GM12878 (cell line): ENCODE measurements at regions of chr19 and their contacts with region 1.

Region 1: GRCh38 chr19:15101479-15102082 is 5.6 kb upstream of the SYDE1 start:
- DNase-seq: no peak
- ATAC-seq: peak; percentile 66
- H3K4me3 ChIP-seq: no peak overlapping the region
- H3K27ac ChIP-seq: no peak overlapping the region
- H3K4me1 ChIP-seq: no peaks in the 10 kb centered on the region
- H3K27me3 ChIP-seq: no peaks in the 10 kb centered on the region
- CTCF ChIP-seq: peak; percentile 48 to 74 (median 62)
- EP300 ChIP-seq: no peak
- POLR2A ChIP-seq: no peak
- RAD21 ChIP-seq: peak; percentile 48

Region 2: GRCh38 chr19:15154002-15154612 is 52.5 kb after region 1 on chr19:
- CTCF ChIA-PET with region 1: interaction called, 52 read pairs
- POLR2A ChIA-PET with region 1: no interaction called
- RAD21 ChIA-PET with region 1: interaction called, 10 read pairs
- SMC1A ChIA-PET with region 1: interaction called, 4 read pairs
- in situ Hi-C with region 1: no loop called
- intact Hi-C with region 1: no loop called
- DNase-seq: no peak
- ATAC-seq: no peak
- H3K4me3 ChIP-seq: no peak overlapping the region
- H3K27ac ChIP-seq: no peak overlapping the region
- H3K4me1 ChIP-seq: no peaks in the 10 kb centered on the region
- H3K27me3 ChIP-seq: no peaks in the 10 kb centered on the region
- CTCF ChIP-seq: peak; percentile 43 to 48 (median 45); a peak in 5 of 6 replicates
- EP300 ChIP-seq: no peak
- POLR2A ChIP-seq: no peak
- RAD21 ChIP-seq: peak; percentile 30; the same call in 1 of the 2 replicates

Region 3: DNA sequence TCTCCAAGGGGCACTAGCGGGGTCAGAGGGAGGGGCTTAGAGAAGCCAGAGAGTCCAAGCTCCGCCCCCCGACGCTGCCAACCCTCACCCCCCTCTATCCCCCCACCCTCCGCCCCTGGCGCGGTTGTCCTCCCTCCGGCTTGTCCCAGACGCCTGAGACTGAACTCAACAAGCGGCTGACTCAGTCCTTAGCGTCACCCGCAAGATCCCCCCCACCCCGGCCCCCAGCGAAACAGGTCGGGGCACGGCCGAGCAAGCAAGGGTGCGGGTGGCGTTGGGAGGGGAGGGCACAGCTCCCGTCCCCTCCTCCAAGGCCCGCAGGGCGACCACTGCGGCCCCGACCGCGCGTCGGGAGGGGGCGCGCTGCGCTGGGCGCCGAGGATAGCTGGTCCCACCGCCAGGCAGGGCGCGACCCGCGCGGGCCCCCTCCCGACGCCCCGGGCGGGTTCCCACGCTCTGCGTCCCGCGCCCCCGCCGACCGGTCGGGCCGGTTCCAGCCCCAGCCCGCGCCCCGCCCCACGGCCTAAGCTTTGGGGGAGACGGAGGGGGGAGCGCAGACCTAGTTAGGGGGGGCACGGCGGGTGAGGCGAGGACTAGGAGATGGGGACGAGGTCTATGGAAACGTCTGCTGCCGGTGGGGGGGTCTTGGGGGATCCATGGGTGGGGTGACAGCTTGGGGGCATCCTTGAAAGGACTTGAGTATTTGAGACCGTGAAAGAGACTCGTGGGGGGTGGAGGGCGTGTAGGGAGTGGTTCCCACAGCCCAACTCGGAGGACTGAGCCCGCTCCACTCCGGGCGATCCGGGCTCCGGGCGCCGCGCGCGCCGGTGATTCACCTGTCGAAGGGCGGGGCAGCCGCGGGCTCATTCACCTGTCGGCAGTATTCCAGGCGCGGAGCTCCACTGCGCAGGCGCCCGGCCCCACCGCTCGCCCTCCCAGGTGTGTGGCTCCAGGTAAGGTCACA is 94.1 kb after region 1 on chr19:
- CTCF ChIA-PET with region 1: no interaction called
- POLR2A ChIA-PET with region 1: no interaction called
- RAD21 ChIA-PET with region 1: no interaction called
- SMC1A ChIA-PET with region 1: no interaction called
- in situ Hi-C with region 1: no loop called
- intact Hi-C with region 1: no loop called
- DNase-seq: no peak
- ATAC-seq: no peak
- H3K4me3 ChIP-seq: no peak overlapping the region
- H3K27ac ChIP-seq: no peak overlapping the region
- H3K4me1 ChIP-seq: no peaks in the 10 kb centered on the region
- H3K27me3 ChIP-seq: peaks cover 0 to 2% of the 10 kb centered on the region in 2 experiments; a peak in 2 of 4 replicates
- CTCF ChIP-seq: no peak
- EP300 ChIP-seq: no peak
- POLR2A ChIP-seq: no peak
- RAD21 ChIP-seq: no peak